ENCODE measurements at regions of chr16 and their contacts with region 1.

Region 1: DNA sequence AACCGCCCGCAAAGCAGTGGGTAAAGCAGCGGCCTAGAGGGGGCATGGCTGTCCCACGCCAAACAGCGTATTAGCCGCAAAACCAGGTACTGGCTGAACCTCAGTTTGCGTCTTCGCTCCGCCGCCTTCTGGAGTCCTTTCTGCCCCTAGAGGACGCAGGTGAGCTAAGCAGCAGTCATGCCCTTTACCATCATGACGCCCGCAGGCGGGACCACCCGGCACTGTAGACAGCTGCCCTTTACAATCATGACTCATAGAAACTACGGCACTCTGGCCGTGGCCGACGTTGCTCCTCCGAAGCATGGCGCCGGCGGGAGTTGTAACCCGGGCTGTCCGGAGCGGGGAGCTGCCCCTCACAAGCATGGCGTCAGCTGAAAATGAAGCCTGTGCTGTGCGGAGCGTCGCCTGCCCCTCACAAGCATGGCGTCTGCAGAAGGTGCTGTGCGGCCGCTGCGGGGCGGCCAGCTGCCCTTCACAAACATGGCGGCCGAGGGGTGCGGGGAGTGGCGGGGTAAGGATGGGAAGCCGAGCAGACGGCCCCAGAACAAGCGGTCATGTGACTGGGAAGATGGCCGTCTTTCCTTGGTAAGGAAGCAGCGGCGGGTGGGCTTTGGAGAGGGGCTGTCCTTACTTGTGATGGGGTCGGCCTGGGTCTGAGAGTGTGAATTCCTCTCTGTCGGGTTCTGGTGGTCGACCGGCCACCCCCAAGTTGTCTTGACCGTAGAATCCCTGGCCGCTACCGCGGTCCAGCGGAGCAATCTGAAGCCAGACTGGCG is at the start of gene VPS35L:
- DNase-seq: peak; percentile 99
- H3K4me3 Mint-ChIP-seq: peak within 1 kb of the TSS; percentile 97
- H3K27ac Mint-ChIP-seq: peak within 1 kb of the TSS; percentile 95
- H3K4me1 Mint-ChIP-seq: peaks cover 12% of the 10 kb centered on the region
- H3K27me3 Mint-ChIP-seq: no peaks in the 10 kb centered on the region
- total RNA-seq, gene VPS35L: 37.8 and 41.9 TPM in 2 replicates

Region 2: DNA sequence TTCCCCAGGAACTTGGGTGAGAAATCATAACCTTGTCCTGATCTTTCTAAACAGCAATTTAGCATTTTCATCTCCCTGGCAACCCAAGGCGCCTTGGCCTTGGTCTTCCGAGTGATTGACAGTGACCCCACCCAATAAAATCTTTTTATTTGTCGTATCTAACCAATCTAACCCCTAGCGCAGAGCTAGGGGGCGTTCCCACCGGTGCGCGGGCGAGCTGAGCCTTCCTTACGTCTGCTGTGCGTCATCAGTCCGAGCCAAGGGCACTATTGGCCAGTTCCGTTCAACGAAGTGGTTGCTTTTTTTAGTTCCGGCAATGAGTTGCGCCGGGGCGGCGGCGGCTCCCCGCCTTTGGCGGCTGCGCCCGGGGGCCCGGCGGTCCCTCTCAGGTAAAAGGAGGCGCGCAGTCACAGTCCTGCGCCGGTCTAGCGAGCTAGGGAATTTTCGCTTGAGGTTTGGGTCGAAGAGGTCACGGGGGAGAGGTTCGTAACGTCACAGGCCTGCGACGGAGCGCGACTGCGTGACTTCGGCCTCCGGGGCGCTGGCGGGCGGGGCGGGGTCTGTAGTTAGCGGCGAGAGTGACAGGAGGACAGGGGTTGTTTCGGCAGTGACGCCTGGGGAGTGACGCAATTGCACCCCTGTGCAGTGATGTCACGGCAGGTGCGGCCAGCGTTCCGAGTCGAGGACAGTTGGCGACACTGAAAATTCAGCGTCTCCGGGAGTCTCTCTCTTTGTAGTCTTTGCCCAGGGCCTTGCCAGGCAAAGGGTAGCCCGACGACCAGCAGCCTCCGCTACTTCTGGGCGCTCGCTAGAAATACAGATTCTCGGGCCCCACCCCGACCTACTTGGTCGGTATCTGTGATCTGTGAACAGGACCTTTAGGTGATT is 487.8 kb before region 1 on chr16 and contains the start of gene COQ7:
- intact Hi-C with region 1: loop called (anchors 1 kb)
- DNase-seq: peak; percentile 99
- H3K4me3 Mint-ChIP-seq: peak within 1 kb of the TSS; percentile 92
- H3K27ac Mint-ChIP-seq: peak within 1 kb of the TSS; percentile 97
- H3K4me1 Mint-ChIP-seq: peaks cover 16% of the 10 kb centered on the region
- H3K27me3 Mint-ChIP-seq: peaks cover 3% of the 10 kb centered on the region
- total RNA-seq, gene COQ7: 21.6 and 22.0 TPM in 2 replicates

Region 3: DNA sequence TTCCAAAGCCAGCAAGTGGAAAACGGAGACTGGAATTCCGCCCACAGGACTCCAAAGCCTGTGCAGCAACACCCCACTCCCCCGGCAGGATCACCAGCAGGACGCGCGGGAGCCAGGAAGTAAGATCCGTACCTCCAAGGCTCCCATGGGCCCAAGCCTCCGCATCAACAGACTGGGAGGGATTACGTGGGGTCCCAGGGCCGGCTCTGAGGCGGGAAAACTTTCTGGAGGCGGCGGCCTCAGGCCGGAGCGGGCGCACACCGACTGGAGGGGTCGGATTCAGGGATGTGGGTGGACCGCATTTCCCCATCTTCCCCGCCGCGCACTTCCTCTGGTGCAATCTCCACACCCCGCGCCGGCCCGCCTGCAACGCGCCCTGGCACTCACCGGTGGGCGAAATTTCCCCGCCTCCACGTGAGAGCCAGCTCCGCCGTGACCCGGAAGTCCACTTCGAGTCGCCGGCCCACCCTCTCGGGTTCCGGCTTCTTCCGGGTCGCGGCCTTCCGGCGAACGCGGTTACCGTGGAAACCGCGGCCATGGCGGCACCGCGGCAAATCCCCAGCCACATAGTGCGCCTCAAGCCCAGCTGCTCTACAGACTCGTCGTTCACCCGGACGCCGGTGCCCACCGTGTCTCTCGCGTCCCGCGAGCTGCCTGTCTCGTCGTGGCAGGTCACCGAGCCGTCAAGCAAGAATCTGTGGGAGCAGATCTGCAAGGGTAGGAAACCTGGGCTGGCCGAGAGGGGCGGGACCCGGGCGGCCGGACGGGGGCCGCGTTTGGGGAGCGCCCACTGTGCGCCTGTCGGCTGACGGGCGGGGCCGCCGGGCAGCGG is 162.6 kb after region 1 on chr16 and contains the starts of genes IQCK and KNOP1:
- intact Hi-C with region 1: loop called (anchors 2 kb)
- DNase-seq: peak; percentile 97
- H3K4me3 Mint-ChIP-seq: peak within 1 kb of the TSS; percentile 96
- H3K27ac Mint-ChIP-seq: peak within 1 kb of the TSS; percentile 89
- H3K4me1 Mint-ChIP-seq: peaks cover 18% of the 10 kb centered on the region
- H3K27me3 Mint-ChIP-seq: no peaks in the 10 kb centered on the region
- total RNA-seq, gene IQCK: 1.0 and 2.0 TPM in 2 replicates
- total RNA-seq, gene KNOP1: 36.9 and 37.0 TPM in 2 replicates

Measured in activated CD4-positive, alpha-beta T cell treated with anti-CD3 and anti-CD28 coated beads, Interleukin-2, amount 10 ng/mL, durations not matched to agents 24 days and 14 days (primary cell).